ENCODE measurements at regions of chr4 and their contacts with region 1.

Region 1: DNA sequence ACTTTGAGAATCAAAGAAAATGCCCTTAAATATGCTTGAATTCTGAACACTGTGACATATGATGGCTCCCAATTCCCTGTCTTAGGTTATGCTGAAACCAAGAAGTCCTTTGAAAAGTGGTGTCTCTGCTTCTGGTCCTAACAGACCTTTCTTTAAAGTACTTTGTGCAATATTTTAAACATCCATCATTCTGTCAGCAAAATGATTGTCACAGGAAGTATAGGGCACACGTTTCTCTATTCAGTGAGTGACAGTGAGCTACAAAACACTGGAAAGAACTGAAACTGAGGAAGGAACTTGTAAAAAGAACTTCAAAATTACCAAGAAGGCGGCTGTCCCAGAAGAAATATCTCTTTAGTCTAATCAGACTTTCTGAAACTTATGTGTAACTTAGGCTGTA is 12.2 kb upstream of the NUP54 start:
- DNase-seq: no peak
- ATAC-seq: no peak
- H3K4me3 ChIP-seq: no peak overlapping the region
- H3K4me3 Mint-ChIP-seq: no peak overlapping the region
- H3K27ac ChIP-seq: no peak overlapping the region
- H3K27ac Mint-ChIP-seq: no peak overlapping the region
- H3K4me1 ChIP-seq: no peaks in the 10 kb centered on the region
- H3K4me1 Mint-ChIP-seq: no peaks in the 10 kb centered on the region
- H3K27me3 ChIP-seq: no peaks in the 10 kb centered on the region
- H3K27me3 Mint-ChIP-seq: no peaks in the 10 kb centered on the region
- CTCF ChIP-seq: no peak

Region 2: GRCh38 chr4:77089866-77090265 is 929.5 kb after region 1 on chr4:
- CTCF ChIA-PET with region 1: no interaction called
- POLR2A ChIA-PET with region 1: no interaction called
- intact Hi-C with region 1: loop called in 1 of 2 experiments (anchors 5 kb)
- DNase-seq: no peak
- ATAC-seq: no peak
- H3K4me3 ChIP-seq: no peak overlapping the region
- H3K4me3 Mint-ChIP-seq: no peak overlapping the region
- H3K27ac ChIP-seq: no peak overlapping the region
- H3K27ac Mint-ChIP-seq: no peak overlapping the region
- H3K4me1 ChIP-seq: no peaks in the 10 kb centered on the region
- H3K4me1 Mint-ChIP-seq: peaks cover 5% of the 10 kb centered on the region
- H3K27me3 ChIP-seq: peaks cover 0 to 2% of the 10 kb centered on the region in 2 experiments
- H3K27me3 Mint-ChIP-seq: no peaks in the 10 kb centered on the region
- CTCF ChIP-seq: no peak